ENCODE measurements at regions of chr3 and their contacts with region 1.

Region 1: DNA sequence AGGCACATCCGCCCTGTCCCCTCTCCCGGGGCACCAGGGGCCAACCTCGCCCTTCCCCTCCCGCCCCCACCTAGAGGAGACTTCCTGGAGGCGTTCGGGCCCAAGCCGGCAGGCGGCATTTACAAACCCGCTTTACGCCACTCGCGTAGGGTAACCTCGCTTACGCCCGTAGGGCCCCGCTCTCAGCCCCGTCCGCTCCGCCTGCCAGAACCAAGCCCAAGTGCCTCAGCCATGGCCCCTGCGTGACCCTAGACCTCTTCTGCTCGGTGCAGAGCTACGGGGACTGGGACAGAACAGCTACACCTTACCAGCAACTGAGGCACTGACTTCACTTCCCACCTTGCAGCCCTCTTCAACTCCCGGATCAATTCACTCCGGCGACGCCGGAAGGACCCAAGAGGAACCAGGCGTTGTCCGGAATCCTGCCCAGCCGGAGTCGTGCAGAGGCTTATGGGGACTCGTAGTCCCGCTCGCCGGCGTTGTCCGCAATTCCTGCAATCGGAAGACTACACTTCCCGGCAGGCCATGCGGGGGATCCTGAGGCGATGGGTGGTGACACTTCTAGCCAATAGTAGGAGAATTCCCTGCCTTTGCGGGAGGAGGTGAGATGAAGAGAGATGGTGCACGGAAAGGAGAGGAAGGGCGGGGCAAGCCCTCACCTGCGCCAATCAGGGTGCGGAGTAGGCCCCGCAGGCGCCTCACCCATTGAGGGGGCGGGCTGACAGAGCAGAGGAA is at the start of gene PDCD10:
- DNase-seq: peak; percentile 98
- ATAC-seq: peak; percentile 94 to 96
- H3K4me3 ChIP-seq: peak within 1 kb of the TSS; percentile 63 to 91 (median 83)
- H3K27ac ChIP-seq: peak within 1 kb of the TSS; percentile 90 to 94 (median 92)
- H3K4me1 ChIP-seq: peaks cover 27 to 33% of the 10 kb centered on the region in 2 donors
- H3K27me3 ChIP-seq: no peaks in the 10 kb centered on the region
- CTCF ChIP-seq: peak in 1 of 5 experiments; percentile 6
- POLR2A ChIP-seq: peak; percentile 52 to 57
- total RNA-seq, gene PDCD10: 25.7 to 32.6 (median 31.6) TPM

Region 2: GRCh38 chr3:166205158-166205557 is 1529.5 kb before region 1 on chr3:
- in situ Hi-C with region 1: no loop called
- intact Hi-C with region 1: no loop called
- DNase-seq: no peak
- ATAC-seq: no peak
- H3K4me3 ChIP-seq: no peak overlapping the region
- H3K27ac ChIP-seq: no peak overlapping the region
- H3K4me1 ChIP-seq: no peaks in the 10 kb centered on the region
- H3K27me3 ChIP-seq: no peaks in the 10 kb centered on the region
- CTCF ChIP-seq: no peak
- POLR2A ChIP-seq: no peak

Region 3: GRCh38 chr3:168040607-168041208 is 306.0 kb after region 1 on chr3:
- in situ Hi-C with region 1: no loop called
- intact Hi-C with region 1: loop called (anchors 5 kb)
- DNase-seq: no peak
- ATAC-seq: peak in 1 of 2 donors; percentile 77
- H3K4me3 ChIP-seq: no peak overlapping the region
- H3K27ac ChIP-seq: no peak overlapping the region
- H3K4me1 ChIP-seq: peaks cover 3 to 15% of the 10 kb centered on the region in 2 donors
- H3K27me3 ChIP-seq: no peaks in the 10 kb centered on the region
- CTCF ChIP-seq: peak; percentile 27 to 63 (median 43)
- POLR2A ChIP-seq: no peak

Region 4: GRCh38 chr3:168095611-168096209 is 361.0 kb after region 1 on chr3 and contains the start of gene GOLIM4:
- in situ Hi-C with region 1: no loop called
- intact Hi-C with region 1: loop called (anchors 2 kb)
- DNase-seq: peak; percentile 95 to 96
- ATAC-seq: peak; percentile 87 to 91
- H3K4me3 ChIP-seq: peak within 1 kb of the TSS; percentile 73 to 92 (median 88)
- H3K27ac ChIP-seq: peak within 1 kb of the TSS; percentile 92 to 97 (median 94)
- H3K4me1 ChIP-seq: peaks cover 42 to 44% of the 10 kb centered on the region in 2 donors
- H3K27me3 ChIP-seq: no peaks in the 10 kb centered on the region
- CTCF ChIP-seq: peak in 1 of 5 experiments; percentile 21
- POLR2A ChIP-seq: peak; percentile 85 to 91
- total RNA-seq, gene GOLIM4: 13.0 to 20.8 (median 17.8) TPM

Measured in gastrocnemius medialis (tissue), 4 donors.